ENCODE measurements at regions of chr3 and their contacts with region 1.

Region 1: DNA sequence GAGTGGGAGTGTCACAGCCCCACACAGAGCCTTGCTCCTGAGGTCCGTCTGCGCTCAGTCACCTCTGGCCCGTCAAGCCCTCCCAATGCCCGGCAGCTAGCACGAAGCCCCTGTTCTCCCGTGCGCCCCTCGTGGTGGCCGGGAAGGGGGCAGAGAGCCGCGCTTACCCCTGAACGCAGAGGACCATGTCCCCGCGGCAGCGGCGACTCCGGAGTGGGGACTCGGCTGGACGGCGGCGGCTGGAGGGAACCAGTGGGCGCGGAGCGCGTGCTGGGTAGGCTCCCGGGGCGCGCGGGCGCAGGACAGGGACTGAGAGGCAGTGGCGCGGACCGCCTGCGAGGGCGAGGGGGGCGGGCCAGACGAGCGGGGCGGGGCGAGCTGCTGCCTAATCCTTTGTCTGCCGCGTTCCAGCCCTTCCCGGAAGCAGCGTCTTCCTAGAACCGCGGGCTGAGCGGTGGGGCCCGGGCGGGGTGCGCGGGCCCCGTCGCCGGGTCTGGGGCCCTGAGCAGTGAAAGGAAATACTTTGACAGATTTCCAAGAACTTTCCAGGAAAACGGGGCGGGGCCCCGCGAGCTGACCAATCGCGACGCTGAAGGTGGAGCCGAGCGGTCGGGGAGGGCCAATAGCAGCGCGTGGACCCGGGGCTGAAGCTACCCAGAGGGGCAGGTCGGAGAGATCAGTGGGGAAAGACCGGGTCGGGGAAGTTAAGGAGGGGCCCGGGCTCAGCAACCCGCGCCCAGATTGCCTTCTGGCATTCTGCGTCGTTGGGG is at the start of gene CISH:
- DNase-seq: peak; percentile 96 to 98 (median 97)
- ATAC-seq: peak; percentile 70 to 79 (median 76)
- H3K4me3 ChIP-seq: peak within 1 kb of the TSS; percentile 77 to 90 (median 82)
- H3K27ac ChIP-seq: peak within 1 kb of the TSS; percentile 65 to 88 (median 76)
- H3K4me1 ChIP-seq: peaks cover 10 to 45% (median 14%) of the 10 kb centered on the region in 3 donors
- H3K27me3 ChIP-seq: no peaks in the 10 kb centered on the region
- CTCF ChIP-seq: no peak
- total RNA-seq, gene CISH: 6.2 to 21.0 (median 9.5) TPM

Region 2: DNA sequence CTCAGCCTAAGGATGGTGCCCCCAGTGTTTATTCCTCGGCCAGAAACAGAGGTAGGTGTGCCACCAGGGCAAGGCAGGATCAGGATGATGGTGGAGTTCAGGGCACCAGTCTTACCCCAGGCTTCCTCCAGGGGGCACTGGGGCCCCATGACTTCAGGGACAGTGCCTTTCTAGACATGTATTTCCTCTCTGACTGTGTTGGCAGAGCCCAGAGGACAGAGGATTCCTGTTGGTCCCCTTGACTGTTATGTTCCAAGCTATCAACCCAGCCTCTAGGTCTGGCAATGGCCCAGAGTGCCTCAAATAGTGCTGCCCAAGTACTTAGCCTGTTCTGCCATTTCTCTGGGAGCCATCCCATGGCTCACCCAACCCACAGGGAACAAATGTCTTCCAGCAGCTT is 39.5 kb before region 1 on chr3:
- intact Hi-C with region 1: loop called in 2 of 3 experiments (anchors 2 kb)
- DNase-seq: peak; percentile 60 to 90 (median 83)
- ATAC-seq: peak; percentile 23 to 53 (median 52)
- H3K4me3 ChIP-seq: no peak overlapping the region
- H3K27ac ChIP-seq: no peak overlapping the region
- H3K4me1 ChIP-seq: peaks cover 0 to 19% (median 17%) of the 10 kb centered on the region in 3 donors
- H3K27me3 ChIP-seq: no peaks in the 10 kb centered on the region
- CTCF ChIP-seq: peak; percentile 86 to 92 (median 89)